ENCODE measurements at regions of chr2 and their contacts with region 1.

Region 1: GRCh38 chr2:26785431-26786206 is at the start of gene CENPA:
- DNase-seq: peak; percentile 97
- ATAC-seq: peak; percentile 100
- H3K4me3 Mint-ChIP-seq: peak within 1 kb of the TSS; percentile 80
- H3K27ac Mint-ChIP-seq: peak within 1 kb of the TSS; percentile 79
- H3K4me1 Mint-ChIP-seq: peaks cover 16% of the 10 kb centered on the region
- H3K27me3 Mint-ChIP-seq: peaks cover 7% of the 10 kb centered on the region
- total RNA-seq, gene CENPA: 37.0 to 38.0 TPM

Region 2: DNA sequence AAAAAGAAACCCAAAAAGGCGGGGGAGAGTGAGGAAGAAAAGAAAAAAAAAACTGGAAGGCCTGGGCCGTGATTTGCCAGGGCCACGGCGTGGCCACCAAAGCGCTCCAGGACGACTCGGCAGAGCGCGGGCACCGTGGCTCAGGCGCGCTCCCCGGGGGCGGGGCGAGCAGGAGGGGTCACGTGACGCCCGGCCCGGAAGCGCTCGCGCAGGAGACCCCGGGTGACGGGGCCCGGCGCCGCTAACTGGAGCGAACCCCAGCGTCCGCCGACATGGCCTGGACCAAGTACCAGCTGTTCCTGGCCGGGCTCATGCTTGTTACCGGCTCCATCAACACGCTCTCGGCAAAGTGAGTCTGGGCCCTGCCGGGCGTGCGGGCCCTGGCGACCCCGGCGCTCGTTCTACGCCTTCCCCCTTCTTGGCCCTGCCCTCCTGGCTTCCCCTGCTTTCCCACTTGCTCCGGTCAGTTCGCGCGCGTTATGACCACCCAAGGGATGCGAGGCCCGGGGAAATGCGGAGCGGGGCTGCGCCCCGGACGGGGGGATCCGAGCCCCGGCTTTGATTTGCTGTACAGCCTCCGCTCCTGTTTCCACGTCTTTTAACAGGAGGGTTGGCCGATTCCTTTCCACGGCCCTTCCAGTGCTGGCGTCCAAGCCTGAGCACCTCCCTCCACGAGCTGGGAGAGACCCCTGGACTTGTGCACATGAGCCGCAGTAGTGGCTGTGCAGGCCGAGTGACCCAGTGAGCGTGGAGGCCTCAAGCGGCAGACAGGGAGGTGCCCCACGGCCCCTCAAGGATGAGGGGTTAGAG is 21.3 kb before region 1 on chr2 and contains the start of gene SLC35F6:
- CTCF ChIA-PET with region 1: interaction called, 3 read pairs
- POLR2A ChIA-PET with region 1: no interaction called
- intact Hi-C with region 1: loop called (anchors 1 kb)
- DNase-seq: peak; percentile 91
- ATAC-seq: peak; percentile 95
- H3K4me3 Mint-ChIP-seq: peak within 1 kb of the TSS; percentile 85
- H3K27ac Mint-ChIP-seq: peak within 1 kb of the TSS; percentile 78
- H3K4me1 Mint-ChIP-seq: peaks cover 36% of the 10 kb centered on the region
- H3K27me3 Mint-ChIP-seq: no peaks in the 10 kb centered on the region
- total RNA-seq, gene SLC35F6: 5.0 to 5.6 TPM

Region 3: GRCh38 chr2:26970244-26970920 is 184.8 kb after region 1 on chr2 and contains the start of gene MAPRE3:
- CTCF ChIA-PET with region 1: no interaction called
- POLR2A ChIA-PET with region 1: no interaction called
- intact Hi-C with region 1: loop called in 1 of 2 experiments (anchors 1 kb)
- DNase-seq: peak; percentile 86
- ATAC-seq: peak; percentile 93
- H3K4me3 Mint-ChIP-seq: peak within 1 kb of the TSS; percentile 72
- H3K27ac Mint-ChIP-seq: peak within 1 kb of the TSS; percentile 5
- H3K4me1 Mint-ChIP-seq: peaks cover 15% of the 10 kb centered on the region
- H3K27me3 Mint-ChIP-seq: peaks cover 11% of the 10 kb centered on the region
- total RNA-seq, gene MAPRE3: 3.2 to 4.1 TPM